Cardiac septum (tissue), 1 donor: ENCODE measurements at regions of chr2 and their contacts with region 1.

Region 1: DNA sequence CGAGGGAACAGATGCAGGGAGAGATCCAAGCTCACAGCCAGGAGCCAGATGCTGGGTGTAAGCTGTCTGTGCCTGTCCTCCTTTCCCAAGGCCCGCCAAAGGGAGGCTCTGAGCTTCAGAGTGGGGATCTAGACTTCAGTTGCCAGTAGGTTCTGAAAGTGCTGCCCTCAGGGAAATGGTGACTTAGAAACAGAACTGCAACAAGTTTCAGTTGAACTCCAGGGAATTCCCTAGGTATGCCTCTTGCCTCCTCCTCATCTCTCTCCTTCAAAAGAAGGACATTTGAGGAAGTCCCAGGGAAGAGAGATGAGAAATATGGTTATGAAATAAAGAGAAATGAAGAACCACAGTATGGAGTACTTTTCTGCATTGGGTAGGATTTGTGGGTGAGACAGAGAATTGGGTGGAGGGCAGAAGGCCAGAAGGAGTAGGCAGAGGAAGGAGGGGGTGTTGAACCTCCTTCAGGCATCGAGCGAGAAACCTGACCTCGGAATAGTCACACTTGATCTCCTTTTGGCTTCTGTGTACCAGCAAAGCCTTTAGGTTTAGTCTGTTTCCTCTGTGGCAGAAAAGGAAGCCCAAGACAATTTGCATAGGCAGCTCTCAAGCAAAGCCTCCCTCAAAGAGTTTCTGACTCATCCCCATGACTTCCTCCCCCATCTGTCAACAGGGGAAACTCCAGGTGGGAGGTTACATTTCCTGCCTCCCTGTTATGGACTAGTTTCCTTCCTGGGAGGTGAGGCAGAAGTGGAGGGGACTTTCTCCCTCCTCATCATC is 45.7 kb downstream of the QPCT start:
- DNase-seq: no peak

Region 2: GRCh38 chr2:37343537-37344434 is 46.4 kb before region 1 on chr2:
- intact Hi-C with region 1: loop called (anchors 2 kb)
- DNase-seq: no peak

Region 3: GRCh38 chr2:37720533-37721200 is 330.5 kb after region 1 on chr2:
- intact Hi-C with region 1: no loop called
- DNase-seq: no peak

Region 4: DNA sequence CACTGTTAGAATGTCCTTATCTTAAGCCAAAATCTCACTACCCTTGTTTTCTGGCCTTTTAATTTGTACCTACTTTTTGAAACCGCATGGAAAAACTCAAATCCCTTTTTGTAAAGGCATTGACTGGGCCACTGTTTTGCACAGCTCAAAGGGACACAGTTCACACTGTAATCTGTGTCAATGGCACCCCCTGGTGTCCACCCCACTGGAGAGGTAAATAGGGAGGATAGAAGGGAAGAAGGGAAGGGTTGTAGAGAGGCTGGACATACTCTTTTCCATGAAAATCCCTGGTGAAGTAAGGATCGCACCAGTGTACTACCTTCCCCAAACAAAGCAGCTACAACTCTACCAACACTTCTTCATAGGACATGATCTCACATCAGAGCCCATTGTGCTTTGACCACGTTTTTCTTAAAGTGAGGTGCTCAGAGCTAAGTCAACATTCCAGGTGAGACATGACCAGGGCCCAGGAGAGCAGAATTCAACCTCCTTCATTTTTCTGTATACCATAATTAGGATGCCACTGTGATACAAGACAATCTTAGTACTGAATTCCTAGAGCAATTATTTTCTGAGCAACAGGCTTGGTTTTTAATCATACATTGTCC is 442.5 kb after region 1 on chr2:
- intact Hi-C with region 1: loop called (anchors 5 kb)
- DNase-seq: peak; percentile 91

Region 5: DNA sequence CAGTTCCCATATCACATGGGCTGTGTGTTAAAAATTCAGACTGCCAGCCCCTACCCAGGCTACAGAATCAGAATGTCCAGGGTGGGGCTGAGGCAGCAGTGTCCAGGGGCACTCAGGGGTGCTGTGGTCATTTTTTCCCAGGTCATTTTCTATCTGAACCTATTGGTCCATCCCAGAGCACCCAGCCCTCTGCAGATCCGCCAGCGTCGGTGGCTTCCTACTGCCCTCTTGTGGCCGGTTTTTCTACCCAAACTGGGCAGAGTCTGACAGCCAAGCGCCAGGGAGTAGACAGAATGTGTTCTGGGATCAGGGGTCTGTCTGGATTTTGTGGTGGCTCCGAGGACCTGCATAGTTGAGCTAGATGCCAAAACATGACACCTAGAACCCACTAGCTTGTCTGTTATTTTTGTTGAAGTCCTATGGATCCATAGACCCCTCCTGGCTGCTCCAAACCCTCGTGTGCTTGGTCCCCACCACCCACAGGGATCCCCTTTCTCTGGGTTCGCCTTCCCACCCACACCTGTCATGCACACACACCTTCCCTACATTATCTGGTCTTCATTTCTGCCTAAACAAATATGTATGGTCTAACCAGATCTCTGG is 500.8 kb after region 1 on chr2:
- intact Hi-C with region 1: loop called (anchors 2 kb)
- DNase-seq: peak; percentile 88

Region 6: GRCh38 chr2:38274286-38275276 is 884.4 kb after region 1 on chr2:
- intact Hi-C with region 1: loop called (anchors 10 kb)
- DNase-seq: no peak